ENCODE measurements at regions of chr3 and their contacts with region 1.

Region 1: DNA sequence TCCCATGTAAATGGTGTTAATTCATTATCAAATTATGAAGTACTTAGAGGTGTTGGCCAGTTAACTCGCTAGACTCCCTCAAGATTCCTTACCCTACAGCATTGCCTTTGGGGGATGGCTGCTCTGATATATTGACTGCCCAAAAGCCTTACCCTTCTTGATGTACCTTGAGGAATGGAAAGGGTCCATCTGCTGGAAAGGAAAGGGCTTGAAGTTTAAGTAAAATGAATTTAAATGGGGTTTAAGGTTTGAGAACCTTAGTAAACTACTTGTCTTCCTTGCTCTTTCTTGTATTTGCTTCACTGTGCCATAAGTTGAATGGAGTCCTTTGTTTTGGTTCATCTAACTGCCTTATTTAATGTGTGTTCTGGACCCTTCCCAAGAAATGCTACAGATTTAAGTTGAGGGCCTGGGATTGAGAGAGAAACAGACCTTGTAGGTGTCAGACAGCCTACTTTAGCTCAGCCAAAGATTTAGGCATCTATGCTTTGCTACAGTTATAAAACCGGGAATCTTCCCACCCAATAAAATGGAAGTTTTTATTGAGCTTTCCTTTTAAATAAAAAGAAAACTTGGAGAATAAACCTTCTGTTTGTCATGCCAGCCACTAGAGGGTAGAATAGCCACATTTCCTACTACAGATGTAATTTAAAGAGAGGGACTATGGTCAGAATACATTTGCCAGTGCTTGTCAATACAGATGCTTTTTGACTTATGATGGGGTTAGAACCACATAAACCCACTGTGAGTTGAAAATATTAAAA is 25.3 kb downstream of the CMSS1 start:
- DNase-seq: peak in 1 of 2 experiments; percentile 33
- H3K4me3 ChIP-seq: no peak overlapping the region
- H3K4me3 Mint-ChIP-seq: no peak overlapping the region
- H3K27ac Mint-ChIP-seq: no peak overlapping the region
- H3K4me1 ChIP-seq: peaks cover 12% of the 10 kb centered on the region; the same call in 1 of the 2 replicates
- H3K4me1 Mint-ChIP-seq: peaks cover 6% of the 10 kb centered on the region
- H3K27me3 ChIP-seq: no peaks in the 10 kb centered on the region
- H3K27me3 Mint-ChIP-seq: no peaks in the 10 kb centered on the region
- CTCF ChIP-seq: peak; percentile 63 to 67

Region 2: GRCh38 chr3:100068826-100069225 is 225.8 kb after region 1 on chr3:
- CTCF ChIA-PET with region 1: no interaction called
- POLR2A ChIA-PET with region 1: no interaction called
- intact Hi-C with region 1: loop called (anchors 2 kb)
- DNase-seq: peak; percentile 70 to 80
- H3K4me3 ChIP-seq: no peak overlapping the region
- H3K4me3 Mint-ChIP-seq: no peak overlapping the region
- H3K27ac Mint-ChIP-seq: no peak overlapping the region
- H3K4me1 ChIP-seq: peaks cover 21% of the 10 kb centered on the region
- H3K4me1 Mint-ChIP-seq: peaks cover 6% of the 10 kb centered on the region
- H3K27me3 ChIP-seq: no peaks in the 10 kb centered on the region
- H3K27me3 Mint-ChIP-seq: no peaks in the 10 kb centered on the region
- CTCF ChIP-seq: peak; percentile 50 to 63

Region 3: GRCh38 chr3:100184948-100185570 is 342.1 kb after region 1 on chr3:
- CTCF ChIA-PET with region 1: no interaction called
- POLR2A ChIA-PET with region 1: no interaction called
- intact Hi-C with region 1: loop called (anchors 5 kb)
- DNase-seq: no peak
- H3K4me3 ChIP-seq: no peak overlapping the region
- H3K4me3 Mint-ChIP-seq: no peak overlapping the region
- H3K27ac Mint-ChIP-seq: no peak overlapping the region
- H3K4me1 ChIP-seq: no peaks in the 10 kb centered on the region
- H3K4me1 Mint-ChIP-seq: no peaks in the 10 kb centered on the region
- H3K27me3 ChIP-seq: no peaks in the 10 kb centered on the region
- H3K27me3 Mint-ChIP-seq: no peaks in the 10 kb centered on the region
- CTCF ChIP-seq: no peak

Measured in Caco-2 (cell line).